ENCODE measurements at regions of chr3 and their contacts with region 1.

Region 1: GRCh38 chr3:25297667-25298585 is 130.1 kb upstream of the RARB start:
- DNase-seq: peak; percentile 39
- H3K4me3 Mint-ChIP-seq: no peak overlapping the region
- H3K27ac Mint-ChIP-seq: no peak overlapping the region
- H3K4me1 Mint-ChIP-seq: peaks cover 14% of the 10 kb centered on the region
- H3K27me3 Mint-ChIP-seq: no peaks in the 10 kb centered on the region
- CTCF ChIP-seq: no peak

Region 2: DNA sequence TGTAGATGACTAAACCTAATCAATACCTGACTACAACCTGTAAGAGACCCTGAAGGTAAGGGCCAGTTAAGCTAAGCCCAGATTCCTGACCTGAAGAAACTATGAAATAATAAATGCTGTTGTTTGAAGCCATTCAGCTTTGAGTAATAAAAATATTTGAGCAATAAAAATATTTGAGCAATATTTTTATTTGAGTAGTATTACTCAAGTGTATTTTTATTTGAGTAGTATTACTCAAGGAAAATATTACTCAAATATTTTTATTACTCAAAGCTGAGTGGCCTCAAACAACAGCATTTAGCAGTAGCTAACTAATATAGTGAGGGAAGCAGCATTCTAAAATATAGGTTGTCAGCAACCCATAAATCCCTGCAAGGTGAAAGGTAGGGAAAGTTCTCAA is 13.7 kb before region 1 on chr3:
- CTCF ChIA-PET with region 1: no interaction called
- POLR2A ChIA-PET with region 1: interaction called, 10 read pairs
- intact Hi-C with region 1: no loop called
- DNase-seq: peak; percentile 3
- H3K4me3 Mint-ChIP-seq: no peak overlapping the region
- H3K27ac Mint-ChIP-seq: no peak overlapping the region
- H3K4me1 Mint-ChIP-seq: no peaks in the 10 kb centered on the region
- H3K27me3 Mint-ChIP-seq: no peaks in the 10 kb centered on the region
- CTCF ChIP-seq: no peak

Region 3: GRCh38 chr3:25582242-25582641 is 284.3 kb after region 1 on chr3:
- CTCF ChIA-PET with region 1: interaction called, 3 read pairs
- POLR2A ChIA-PET with region 1: no interaction called
- intact Hi-C with region 1: loop called (anchors 10 kb)
- DNase-seq: peak; percentile 94
- H3K4me3 Mint-ChIP-seq: no peak overlapping the region
- H3K27ac Mint-ChIP-seq: no peak overlapping the region
- H3K4me1 Mint-ChIP-seq: peaks cover 13% of the 10 kb centered on the region
- H3K27me3 Mint-ChIP-seq: peaks cover 73% of the 10 kb centered on the region
- CTCF ChIP-seq: no peak

Measured in MCF 10A (cell line).